Psoas muscle (tissue), 8 donors: ENCODE measurements at regions of chr1 and their contacts with region 1.

Region 1: GRCh38 chr1:184827600-184828368 is 73.1 kb upstream of the EDEM3 start:
- DNase-seq: no peak
- ATAC-seq: peak; percentile 87 to 88 (median 88)
- H3K4me3 ChIP-seq: no peak overlapping the region
- H3K27ac ChIP-seq: peak overlapping the region; percentile 92
- H3K4me1 ChIP-seq: peaks cover 69% of the 10 kb centered on the region
- H3K27me3 ChIP-seq: no peaks in the 10 kb centered on the region
- CTCF ChIP-seq: no peak

Region 2: GRCh38 chr1:184838489-184838951 is 10.7 kb after region 1 on chr1:
- intact Hi-C with region 1: loop called in 1 of 2 experiments (anchors 1 kb)
- DNase-seq: peak; percentile 62 to 78
- ATAC-seq: peak; percentile 99
- H3K4me3 ChIP-seq: peak overlapping the region; percentile 2
- H3K27ac ChIP-seq: peak overlapping the region; percentile 81
- H3K4me1 ChIP-seq: peaks cover 38% of the 10 kb centered on the region
- H3K27me3 ChIP-seq: no peaks in the 10 kb centered on the region
- CTCF ChIP-seq: no peak

Region 3: DNA sequence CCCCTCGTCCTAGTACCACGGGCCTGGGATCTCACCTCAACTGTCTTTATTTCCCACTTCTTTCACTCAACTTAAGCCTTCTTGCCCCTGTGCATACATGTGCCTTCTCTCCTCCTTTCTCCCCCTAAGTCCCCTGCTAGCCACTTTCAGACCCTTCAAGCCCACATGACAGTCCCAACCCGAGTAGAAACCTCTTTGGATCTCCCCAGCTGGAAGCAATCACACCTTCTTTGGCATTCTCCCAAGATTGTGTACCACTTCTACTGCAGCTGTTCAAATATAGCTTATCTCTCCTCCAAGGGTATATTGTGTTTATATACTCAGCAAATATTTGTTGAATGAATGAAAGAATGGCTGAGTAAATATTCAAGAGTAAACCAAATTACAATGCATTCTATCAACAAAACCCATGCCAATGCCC is 77.7 kb after region 1 on chr1:
- intact Hi-C with region 1: no loop called
- DNase-seq: no peak
- ATAC-seq: no peak
- H3K4me3 ChIP-seq: no peak overlapping the region
- H3K27ac ChIP-seq: no peak overlapping the region
- H3K4me1 ChIP-seq: peaks cover 43% of the 10 kb centered on the region
- H3K27me3 ChIP-seq: no peaks in the 10 kb centered on the region
- CTCF ChIP-seq: no peak